Naive thymus-derived CD4-positive, alpha-beta T cell (primary cell): ENCODE measurements at regions of chr1 and their contacts with region 1.

Region 1: DNA sequence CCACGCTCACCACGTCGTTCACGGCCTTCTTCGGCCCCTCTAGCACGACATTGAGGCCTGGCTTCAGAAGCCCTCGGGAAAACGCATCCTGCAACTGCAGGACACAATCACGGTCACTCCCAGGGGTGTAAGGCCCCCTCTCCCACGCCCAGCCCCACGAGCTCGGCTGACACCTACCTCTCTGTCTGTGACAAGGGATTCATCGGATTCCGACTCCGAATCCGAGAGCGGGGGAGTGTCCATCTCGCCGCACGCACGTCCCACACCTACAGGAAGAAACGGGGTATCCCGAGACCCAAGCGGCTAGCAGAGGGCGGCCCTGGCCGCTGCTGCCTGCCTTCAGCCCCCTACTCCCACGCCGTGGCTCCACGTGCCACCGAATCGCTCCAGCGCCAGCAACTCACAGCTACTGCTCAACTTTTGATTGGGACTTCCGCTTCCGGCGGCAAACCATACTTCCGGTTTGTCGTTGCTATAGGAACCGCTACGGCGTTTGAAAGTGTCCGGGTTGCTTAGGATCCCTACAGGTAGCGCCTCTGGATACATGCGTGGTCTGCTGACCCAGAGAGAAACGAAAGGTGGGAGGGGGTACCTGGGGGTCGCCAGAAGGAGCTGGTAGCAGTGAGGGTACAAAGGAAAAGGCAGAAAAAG is at the starts of genes CFAP57 and EBNA1BP2:
- DNase-seq: peak; percentile 78 to 95 (median 92)
- ATAC-seq: peak; percentile 82
- H3K4me3 ChIP-seq: peak within 1 kb of the TSS; percentile 95
- H3K4me3 Mint-ChIP-seq: peak within 1 kb of the TSS; percentile 90 to 100 (median 99)
- H3K27ac ChIP-seq: peak within 1 kb of the TSS; percentile 74
- H3K27ac Mint-ChIP-seq: peak within 1 kb of the TSS; percentile 89 to 98 (median 95)
- H3K4me1 ChIP-seq: peaks cover 10 to 13% of the 10 kb centered on the region in 2 donors
- H3K4me1 Mint-ChIP-seq: peaks cover 14 to 49% (median 33%) of the 10 kb centered on the region in 7 donors
- H3K27me3 ChIP-seq: peaks cover 0 to 3% of the 10 kb centered on the region in 2 donors
- H3K27me3 Mint-ChIP-seq: peaks cover 14 to 25% (median 19%) of the 10 kb centered on the region in 5 donors
- total RNA-seq, gene CFAP57: 0.07 TPM in 1 of 5 experiments, not detected in the others
- total RNA-seq, gene EBNA1BP2: 17.8 to 46.1 (median 22.7) TPM

Region 2: GRCh38 chr1:41360993-41361753 is 1810.8 kb before region 1 on chr1 and contains the start of gene FOXO6:
- CTCF ChIA-PET with region 1: no interaction called
- POLR2A ChIA-PET with region 1: no interaction called
- intact Hi-C with region 1: loop called in 1 of 2 experiments (anchors 5 kb)
- DNase-seq: peak; percentile 87 to 94 (median 91)
- ATAC-seq: peak; percentile 95
- H3K4me3 ChIP-seq: peak within 1 kb of the TSS; percentile 51
- H3K4me3 Mint-ChIP-seq: peak within 1 kb of the TSS; percentile 65 to 86 (median 80)
- H3K27ac ChIP-seq: peak within 1 kb of the TSS; percentile 25
- H3K27ac Mint-ChIP-seq: peak within 1 kb of the TSS in 7 of 9 donors; percentile 3 to 91 (median 73)
- H3K4me1 ChIP-seq: peaks cover 4 to 6% of the 10 kb centered on the region in 2 donors
- H3K4me1 Mint-ChIP-seq: peaks cover 4 to 28% (median 9%) of the 10 kb centered on the region in 7 donors
- H3K27me3 ChIP-seq: peaks cover 5 to 7% of the 10 kb centered on the region in 2 donors
- H3K27me3 Mint-ChIP-seq: peaks cover 10 to 58% (median 35%) of the 10 kb centered on the region in 5 donors
- total RNA-seq, gene FOXO6: 0.66 to 1.3 TPM in 2 of 5 experiments, not detected in the others

Region 3: DNA sequence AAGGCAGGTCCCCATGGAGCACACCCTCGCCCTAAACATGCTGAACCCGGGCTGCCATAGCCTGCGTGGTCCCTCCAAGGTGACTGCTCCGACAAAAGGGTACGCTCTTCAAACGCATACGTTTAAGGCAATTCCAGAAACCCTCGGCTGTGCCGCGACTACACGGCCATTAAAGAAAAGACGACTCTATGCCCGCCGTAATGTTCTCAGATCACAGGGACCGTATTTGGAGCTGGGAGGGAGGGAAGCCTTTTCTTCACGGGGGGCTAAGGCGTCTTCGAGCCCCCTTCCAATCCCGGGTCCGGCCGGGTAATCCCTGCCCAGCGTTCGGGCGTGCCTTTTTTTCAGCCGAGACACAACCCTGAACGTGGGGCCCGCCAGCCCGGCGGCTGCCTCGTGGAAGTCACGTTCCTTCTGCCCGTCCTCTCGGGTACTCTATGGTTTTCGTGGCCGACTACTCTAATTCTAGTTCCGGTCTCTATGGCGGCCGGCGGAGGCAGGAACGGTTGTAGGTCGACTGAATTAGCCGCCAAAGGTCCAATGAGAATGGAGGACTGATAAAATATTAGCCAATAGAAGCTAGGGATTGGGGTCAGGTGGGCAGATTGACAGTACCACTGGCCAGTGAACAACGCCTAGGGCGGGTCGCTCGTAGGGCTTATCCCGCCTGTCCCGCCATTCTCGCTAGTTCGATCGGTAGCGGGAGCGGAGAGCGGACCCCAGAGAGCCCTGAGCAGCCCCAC is 490.1 kb before region 1 on chr1 and contains the start of gene YBX1:
- CTCF ChIA-PET with region 1: no interaction called
- POLR2A ChIA-PET with region 1: interaction called, 4 read pairs
- intact Hi-C with region 1: loop called (anchors 1 kb)
- DNase-seq: peak; percentile 85 to 98 (median 97)
- ATAC-seq: peak; percentile 94
- H3K4me3 ChIP-seq: peak within 1 kb of the TSS; percentile 74
- H3K4me3 Mint-ChIP-seq: peak within 1 kb of the TSS; percentile 95 to 99 (median 98)
- H3K27ac ChIP-seq: peak within 1 kb of the TSS; percentile 82
- H3K27ac Mint-ChIP-seq: peak within 1 kb of the TSS; percentile 93 to 98 (median 97)
- H3K4me1 ChIP-seq: peaks cover 35 to 47% of the 10 kb centered on the region in 2 donors
- H3K4me1 Mint-ChIP-seq: peaks cover 42 to 66% (median 54%) of the 10 kb centered on the region in 7 donors
- H3K27me3 ChIP-seq: no peaks in the 10 kb centered on the region
- H3K27me3 Mint-ChIP-seq: no peaks in the 10 kb centered on the region
- total RNA-seq, gene YBX1: 277 to 471 (median 287) TPM

Region 4: DNA sequence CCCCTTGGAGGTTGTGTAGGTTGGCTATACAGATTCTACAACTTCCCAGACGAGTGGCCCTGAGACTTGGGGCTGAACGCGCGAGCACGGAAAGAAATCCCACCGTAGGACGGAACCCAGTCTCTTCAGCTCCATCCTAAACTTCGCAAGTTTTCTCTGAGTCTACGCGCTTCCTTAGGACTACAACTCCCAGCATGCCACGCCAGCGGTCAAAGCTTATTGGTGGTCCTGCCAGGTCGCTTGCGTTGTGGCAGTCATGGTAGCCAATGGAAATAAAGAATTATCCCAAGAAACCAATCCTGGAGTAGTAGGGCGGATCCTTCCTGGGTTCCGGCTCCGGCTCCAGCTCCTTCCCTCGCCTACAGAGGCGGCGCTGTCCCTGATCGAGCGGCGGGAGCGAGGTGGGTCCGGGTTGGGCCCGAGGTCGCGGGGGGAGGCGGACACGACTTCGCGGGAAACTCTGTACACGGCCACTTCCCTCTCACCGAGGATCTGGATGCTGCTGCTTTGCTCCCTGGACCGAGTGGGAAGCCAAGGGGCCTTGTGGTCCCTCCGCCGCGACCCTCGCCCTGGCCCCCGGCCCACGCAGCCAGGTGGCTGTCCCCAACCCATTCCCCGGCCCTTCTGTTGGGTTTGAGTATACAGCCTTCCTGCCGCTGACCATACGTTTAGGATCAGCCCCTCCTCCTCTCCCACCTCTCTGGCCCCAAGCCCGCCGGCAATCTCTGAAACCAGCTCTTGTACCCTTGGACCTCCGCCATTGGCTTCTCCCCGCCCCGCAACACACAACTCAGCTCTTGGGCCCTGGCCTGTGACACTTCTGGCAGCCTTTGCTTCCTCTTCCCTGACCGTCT is 325.5 kb before region 1 on chr1 and contains the start of gene ZNF691:
- CTCF ChIA-PET with region 1: no interaction called
- POLR2A ChIA-PET with region 1: no interaction called
- intact Hi-C with region 1: loop called (anchors 1 kb)
- DNase-seq: peak; percentile 51 to 91 (median 84)
- ATAC-seq: peak; percentile 99
- H3K4me3 ChIP-seq: peak within 1 kb of the TSS; percentile 97
- H3K4me3 Mint-ChIP-seq: peak within 1 kb of the TSS; percentile 84 to 100 (median 96)
- H3K27ac ChIP-seq: peak within 1 kb of the TSS; percentile 72
- H3K27ac Mint-ChIP-seq: peak within 1 kb of the TSS; percentile 71 to 95 (median 85)
- H3K4me1 ChIP-seq: peaks cover 11 to 22% of the 10 kb centered on the region in 2 donors
- H3K4me1 Mint-ChIP-seq: peaks cover 19 to 38% (median 31%) of the 10 kb centered on the region in 7 donors
- H3K27me3 ChIP-seq: no peaks in the 10 kb centered on the region
- H3K27me3 Mint-ChIP-seq: no peaks in the 10 kb centered on the region
- total RNA-seq, gene ZNF691: 3.5 to 17.2 (median 12.8) TPM

Region 5: GRCh38 chr1:43137445-43138052 is 34.5 kb before region 1 on chr1:
- CTCF ChIA-PET with region 1: no interaction called
- POLR2A ChIA-PET with region 1: no interaction called
- intact Hi-C with region 1: no loop called
- DNase-seq: no peak
- ATAC-seq: no peak
- H3K4me3 ChIP-seq: no peak overlapping the region
- H3K4me3 Mint-ChIP-seq: no peak overlapping the region
- H3K27ac ChIP-seq: no peak overlapping the region
- H3K27ac Mint-ChIP-seq: no peak overlapping the region
- H3K4me1 ChIP-seq: no peaks in the 10 kb centered on the region
- H3K4me1 Mint-ChIP-seq: no peaks in the 10 kb centered on the region
- H3K27me3 ChIP-seq: no peaks in the 10 kb centered on the region
- H3K27me3 Mint-ChIP-seq: peaks cover 22 to 34% (median 30%) of the 10 kb centered on the region in 5 donors

Region 6: DNA sequence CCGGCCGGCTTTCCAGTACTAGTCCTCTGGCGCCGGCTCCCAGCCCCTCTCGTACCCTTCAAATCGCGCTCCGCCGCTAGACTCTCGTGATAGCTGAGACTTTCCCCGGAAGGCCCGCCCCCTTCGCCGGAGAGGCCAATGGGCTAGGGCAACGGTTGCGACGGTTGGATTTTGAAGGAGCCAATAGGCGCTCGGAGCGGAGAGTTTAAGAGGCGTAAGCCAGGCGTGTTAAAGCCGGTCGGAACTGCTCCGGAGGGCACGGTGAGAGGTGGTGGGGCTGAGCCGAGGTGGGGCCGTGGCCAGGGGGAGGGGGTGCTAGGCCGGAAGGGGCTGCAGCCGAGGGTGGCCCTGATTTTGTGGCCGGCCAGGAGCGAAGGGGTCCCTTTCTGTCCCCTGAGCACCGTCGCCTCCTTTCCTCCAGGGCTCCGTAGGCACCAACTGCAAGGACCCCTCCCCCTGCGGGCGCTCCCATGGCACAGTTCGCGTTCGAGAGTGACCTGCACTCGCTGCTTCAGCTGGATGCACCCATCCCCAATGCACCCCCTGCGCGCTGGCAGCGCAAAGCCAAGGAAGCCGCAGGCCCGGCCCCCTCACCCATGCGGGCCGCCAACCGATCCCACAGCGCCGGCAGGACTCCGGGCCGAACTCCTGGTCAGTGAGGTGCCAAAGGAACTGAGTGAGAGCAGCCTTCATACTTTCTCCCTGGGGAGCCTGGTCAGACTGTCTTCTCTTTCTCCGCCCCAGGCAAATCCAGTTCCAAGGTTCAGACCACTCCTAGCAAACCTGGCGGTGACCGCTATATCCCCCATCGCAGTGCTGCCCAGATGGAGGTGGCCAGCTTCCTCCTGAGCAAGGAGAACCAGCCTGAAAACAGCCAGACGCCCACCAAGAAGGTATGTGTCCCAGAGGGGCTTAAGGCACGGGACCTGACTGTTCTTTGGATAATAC is 187.0 kb after region 1 on chr1 and contains the start of gene CDC20:
- CTCF ChIA-PET with region 1: no interaction called
- POLR2A ChIA-PET with region 1: interaction called, 3 read pairs
- intact Hi-C with region 1: loop called (anchors 1 kb)
- DNase-seq: peak; percentile 91 to 99 (median 96)
- ATAC-seq: peak; percentile 100
- H3K4me3 ChIP-seq: peak within 1 kb of the TSS; percentile 90
- H3K4me3 Mint-ChIP-seq: peak within 1 kb of the TSS; percentile 74 to 97 (median 90)
- H3K27ac ChIP-seq: peak within 1 kb of the TSS; percentile 78
- H3K27ac Mint-ChIP-seq: peak within 1 kb of the TSS; percentile 22 to 88 (median 87)
- H3K4me1 ChIP-seq: peaks cover 5 to 10% of the 10 kb centered on the region in 2 donors
- H3K4me1 Mint-ChIP-seq: peaks cover 10 to 55% (median 20%) of the 10 kb centered on the region in 7 donors
- H3K27me3 ChIP-seq: no peaks in the 10 kb centered on the region
- H3K27me3 Mint-ChIP-seq: no peaks in the 10 kb centered on the region
- total RNA-seq, gene CDC20: 0.38 to 101 (median 0.78) TPM

Region 7: GRCh38 chr1:43454266-43455011 is 282.4 kb after region 1 on chr1:
- CTCF ChIA-PET with region 1: no interaction called
- POLR2A ChIA-PET with region 1: no interaction called
- intact Hi-C with region 1: loop called in 1 of 2 experiments (anchors 1 kb)
- DNase-seq: peak in 8 of 9 donors; percentile 53 to 67 (median 63)
- ATAC-seq: peak; percentile 85
- H3K4me3 ChIP-seq: peak overlapping the region; percentile 56
- H3K4me3 Mint-ChIP-seq: peak overlapping the region; percentile 86 to 95 (median 89)
- H3K27ac ChIP-seq: peak overlapping the region; percentile 57
- H3K27ac Mint-ChIP-seq: peak overlapping the region; percentile 63 to 96 (median 85)
- H3K4me1 ChIP-seq: peaks cover 0 to 9% of the 10 kb centered on the region in 2 donors
- H3K4me1 Mint-ChIP-seq: peaks cover 9 to 22% (median 18%) of the 10 kb centered on the region in 7 donors
- H3K27me3 ChIP-seq: no peaks in the 10 kb centered on the region
- H3K27me3 Mint-ChIP-seq: peaks cover 5 to 35% (median 12%) of the 10 kb centered on the region in 5 donors

Region 8: GRCh38 chr1:43946236-43947060 is 774.4 kb after region 1 on chr1 and contains the start of gene IPO13:
- CTCF ChIA-PET with region 1: no interaction called
- POLR2A ChIA-PET with region 1: no interaction called
- intact Hi-C with region 1: loop called (anchors 2 to 10 kb)
- DNase-seq: peak; percentile 92 to 99 (median 96)
- ATAC-seq: peak; percentile 98
- H3K4me3 ChIP-seq: peak within 1 kb of the TSS; percentile 86
- H3K4me3 Mint-ChIP-seq: peak within 1 kb of the TSS; percentile 87 to 96 (median 90)
- H3K27ac ChIP-seq: peak within 1 kb of the TSS; percentile 97
- H3K27ac Mint-ChIP-seq: peak within 1 kb of the TSS; percentile 84 to 98 (median 94)
- H3K4me1 ChIP-seq: peaks cover 17% of the 10 kb centered on the region in 2 donors
- H3K4me1 Mint-ChIP-seq: peaks cover 37 to 68% (median 56%) of the 10 kb centered on the region in 7 donors
- H3K27me3 ChIP-seq: no peaks in the 10 kb centered on the region
- H3K27me3 Mint-ChIP-seq: no peaks in the 10 kb centered on the region
- total RNA-seq, gene IPO13: 10.1 to 32.3 (median 17.0) TPM